Endothelial cell of umbilical vein (primary cell): ENCODE measurements at regions of chr3 and their contacts with region 1.

Region 1: GRCh38 chr3:12663936-12664908 is at the start of gene RAF1:
- DNase-seq: peak; percentile 99
- H3K4me3 ChIP-seq: peak within 1 kb of the TSS; percentile 84 to 99 (median 96)
- H3K27ac ChIP-seq: peak within 1 kb of the TSS; percentile 87
- H3K4me1 ChIP-seq: peaks cover 13% of the 10 kb centered on the region
- H3K27me3 ChIP-seq: no peaks in the 10 kb centered on the region
- CTCF ChIP-seq: no peak
- POLR2A ChIP-seq: peak; percentile 97
- total RNA-seq, gene RAF1: 73.8 and 86.1 TPM in 2 replicates

Region 2: DNA sequence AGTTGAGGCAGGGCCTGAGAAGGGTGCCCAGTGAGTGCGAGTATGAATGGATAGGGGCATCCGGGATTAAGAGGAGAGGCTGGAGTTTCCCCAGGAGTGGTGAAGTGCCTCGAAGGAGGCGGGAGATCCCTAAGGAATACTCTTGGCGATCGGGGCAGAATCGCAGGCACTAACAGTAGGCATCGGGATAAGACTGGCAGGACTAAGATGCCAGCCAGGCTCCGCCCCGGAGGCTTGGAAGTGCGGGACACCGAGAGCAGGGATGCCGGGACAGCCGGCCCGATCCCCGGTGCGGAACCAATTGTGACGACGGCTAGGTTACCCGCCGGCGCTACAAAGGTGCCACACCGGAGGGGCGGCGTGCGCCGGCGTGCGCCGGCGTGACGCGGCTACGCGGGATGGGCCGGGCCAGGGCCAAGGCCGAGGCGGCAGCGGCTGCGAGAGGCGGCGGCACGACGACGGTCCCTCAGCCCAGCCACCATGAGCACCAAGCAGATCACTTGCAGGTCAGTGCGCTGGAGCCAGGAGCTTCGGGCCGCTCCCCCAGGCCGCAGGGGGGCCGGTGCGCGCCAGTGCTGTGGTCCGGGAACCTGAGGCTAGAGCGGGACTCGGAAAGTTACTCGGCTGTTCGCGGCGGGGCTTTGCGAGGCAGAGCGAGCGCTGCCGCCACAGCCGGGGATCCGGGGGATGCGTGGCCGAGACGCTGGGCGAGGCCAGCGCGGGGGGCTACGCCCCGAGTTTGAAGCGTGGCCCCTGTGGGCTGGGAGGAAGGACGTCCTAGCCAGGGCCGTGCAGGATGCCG is 107.3 kb before region 1 on chr3 and contains the start of gene MKRN2:
- CTCF ChIA-PET with region 1: no interaction called
- POLR2A ChIA-PET with region 1: no interaction called
- dilution Hi-C with region 1: no loop called
- intact Hi-C with region 1: loop called (anchors 1 kb)
- DNase-seq: peak; percentile 89
- H3K4me3 ChIP-seq: peak within 1 kb of the TSS; percentile 86 to 98 (median 89)
- H3K27ac ChIP-seq: peak within 1 kb of the TSS; percentile 56
- H3K4me1 ChIP-seq: peaks cover 21% of the 10 kb centered on the region
- H3K27me3 ChIP-seq: no peaks in the 10 kb centered on the region
- CTCF ChIP-seq: no peak
- POLR2A ChIP-seq: peak; percentile 98
- total RNA-seq, gene MKRN2: 26.4 and 27.3 TPM in 2 replicates

Region 3: GRCh38 chr3:12588039-12589009 is 75.9 kb before region 1 on chr3:
- CTCF ChIA-PET with region 1: no interaction called
- POLR2A ChIA-PET with region 1: no interaction called
- dilution Hi-C with region 1: no loop called
- intact Hi-C with region 1: loop called (anchors 5 kb)
- DNase-seq: peak; percentile 16
- H3K4me3 ChIP-seq: no peak overlapping the region
- H3K27ac ChIP-seq: no peak overlapping the region
- H3K4me1 ChIP-seq: peaks cover 12% of the 10 kb centered on the region
- H3K27me3 ChIP-seq: no peaks in the 10 kb centered on the region
- CTCF ChIP-seq: no peak
- POLR2A ChIP-seq: no peak

Region 4: DNA sequence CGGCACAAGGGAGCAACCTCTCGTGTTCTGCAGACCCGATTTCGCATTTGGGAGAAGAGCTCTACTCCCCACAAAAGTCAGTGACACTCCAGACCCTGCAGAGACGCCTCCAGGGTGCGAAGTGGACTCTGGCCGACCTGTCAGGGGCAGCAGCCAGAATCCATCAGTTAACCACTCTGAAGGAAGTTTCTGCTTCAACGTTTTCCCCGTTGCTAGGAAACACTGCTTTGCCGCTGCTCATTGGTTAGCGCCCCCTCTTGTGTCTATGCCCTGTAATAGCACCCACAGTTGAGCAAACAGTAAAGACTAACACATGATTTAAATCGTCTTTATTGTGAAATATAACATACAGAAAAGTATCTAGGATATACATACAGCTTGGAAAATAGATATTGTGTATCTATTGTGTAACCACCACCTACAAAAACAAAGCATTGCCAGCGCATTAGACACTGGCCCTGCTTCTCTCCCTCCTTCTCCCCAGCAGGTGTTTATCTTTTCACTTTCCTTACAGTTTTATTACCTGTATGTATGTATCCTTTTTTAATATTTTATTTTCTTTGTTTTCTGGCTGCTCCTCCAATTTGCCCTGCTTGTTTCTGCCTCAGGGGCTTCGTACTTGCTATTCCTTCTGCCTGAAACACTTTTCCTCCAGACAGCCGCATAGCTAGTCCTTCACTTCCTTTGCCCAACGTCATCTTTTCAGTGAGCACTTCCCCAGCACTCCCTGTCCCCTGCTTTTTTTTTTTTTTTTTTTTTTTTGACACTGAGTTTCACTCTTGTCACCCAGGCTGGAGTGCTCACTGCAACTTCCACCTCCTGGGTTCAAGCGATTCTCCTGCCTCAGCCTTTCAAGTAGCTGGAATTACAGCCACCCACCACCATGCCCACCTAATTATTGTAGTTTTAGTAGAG is 56.0 kb after region 1 on chr3:
- CTCF ChIA-PET with region 1: no interaction called
- POLR2A ChIA-PET with region 1: no interaction called
- dilution Hi-C with region 1: no loop called
- intact Hi-C with region 1: loop called (anchors 5 kb)
- DNase-seq: peak; percentile 85
- H3K4me3 ChIP-seq: no peak overlapping the region
- H3K27ac ChIP-seq: no peak overlapping the region
- H3K4me1 ChIP-seq: no peaks in the 10 kb centered on the region
- H3K27me3 ChIP-seq: no peaks in the 10 kb centered on the region
- CTCF ChIP-seq: peak; percentile 82 to 90
- POLR2A ChIP-seq: no peak

Region 5: GRCh38 chr3:12815719-12816118 is 151.5 kb after region 1 on chr3:
- CTCF ChIA-PET with region 1: no interaction called
- POLR2A ChIA-PET with region 1: no interaction called
- dilution Hi-C with region 1: no loop called
- intact Hi-C with region 1: no loop called
- DNase-seq: no peak
- H3K4me3 ChIP-seq: no peak overlapping the region
- H3K27ac ChIP-seq: no peak overlapping the region
- H3K4me1 ChIP-seq: peaks cover under 1% of the 10 kb centered on the region
- H3K27me3 ChIP-seq: no peaks in the 10 kb centered on the region
- CTCF ChIP-seq: no peak
- POLR2A ChIP-seq: no peak

Region 6: DNA sequence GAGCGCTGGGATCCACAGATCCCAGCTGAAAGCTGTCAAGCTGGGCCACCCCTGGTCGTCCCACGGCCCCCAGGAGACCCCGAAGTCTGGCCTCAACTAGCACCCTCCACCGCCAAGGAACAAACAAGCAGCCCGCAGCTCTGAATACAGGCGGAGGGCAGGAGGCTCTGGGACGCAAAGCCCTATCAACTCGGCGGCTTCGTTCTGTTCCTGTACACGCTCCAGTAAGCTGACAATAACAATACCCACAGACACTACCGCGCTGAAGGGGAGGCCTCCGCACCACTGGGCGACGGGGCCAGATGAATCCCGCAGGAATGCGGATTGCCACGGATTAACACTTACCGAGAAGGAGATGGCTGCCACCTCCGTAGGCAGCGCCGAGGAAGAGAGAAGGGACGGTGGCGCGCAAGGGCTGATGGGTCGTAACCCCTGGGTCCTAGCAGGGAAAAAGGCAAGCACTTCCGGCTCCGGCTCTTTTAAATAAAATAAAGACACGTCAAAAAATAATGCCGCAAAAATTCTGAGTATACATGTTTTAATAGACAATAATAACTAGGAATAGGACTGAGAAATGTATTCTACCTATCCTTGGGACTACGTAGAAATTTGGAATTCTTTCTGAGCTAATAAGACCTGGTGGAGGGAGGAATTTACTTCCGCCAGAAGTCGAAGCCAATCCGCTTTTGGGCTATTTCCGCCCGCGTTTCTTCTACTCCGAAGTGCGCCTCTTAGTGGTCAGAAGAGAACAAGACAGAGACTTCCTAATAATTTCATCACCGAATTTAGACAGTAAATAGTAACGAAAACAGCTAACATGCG is 177.1 kb after region 1 on chr3 and contains the start of gene RPL32:
- CTCF ChIA-PET with region 1: interaction called, 7 read pairs
- POLR2A ChIA-PET with region 1: no interaction called
- dilution Hi-C with region 1: no loop called
- intact Hi-C with region 1: loop called (anchors 2 kb)
- DNase-seq: peak; percentile 97
- H3K4me3 ChIP-seq: peak within 1 kb of the TSS; percentile 88 to 98 (median 91)
- H3K27ac ChIP-seq: peak within 1 kb of the TSS; percentile 95
- H3K4me1 ChIP-seq: peaks cover 26% of the 10 kb centered on the region
- H3K27me3 ChIP-seq: no peaks in the 10 kb centered on the region
- CTCF ChIP-seq: peak; percentile 74 to 87
- POLR2A ChIP-seq: peak; percentile 98
- total RNA-seq, gene RPL32: 1,569 and 1,588 TPM in 2 replicates